Gastrocnemius medialis (tissue), 4 donors: ENCODE measurements at regions of chr11 and their contacts with region 1.

Region 1: GRCh38 chr11:129331871-129332274 is 43.8 kb upstream of the BARX2 start:
- DNase-seq: peak; percentile 45 to 66
- ATAC-seq: peak; percentile 78 to 88
- H3K4me3 ChIP-seq: no peak overlapping the region
- H3K27ac ChIP-seq: no peak overlapping the region
- H3K4me1 ChIP-seq: no peaks in the 10 kb centered on the region
- H3K27me3 ChIP-seq: no peaks in the 10 kb centered on the region
- CTCF ChIP-seq: peak; percentile 73 to 85 (median 83)
- POLR2A ChIP-seq: no peak

Region 2: DNA sequence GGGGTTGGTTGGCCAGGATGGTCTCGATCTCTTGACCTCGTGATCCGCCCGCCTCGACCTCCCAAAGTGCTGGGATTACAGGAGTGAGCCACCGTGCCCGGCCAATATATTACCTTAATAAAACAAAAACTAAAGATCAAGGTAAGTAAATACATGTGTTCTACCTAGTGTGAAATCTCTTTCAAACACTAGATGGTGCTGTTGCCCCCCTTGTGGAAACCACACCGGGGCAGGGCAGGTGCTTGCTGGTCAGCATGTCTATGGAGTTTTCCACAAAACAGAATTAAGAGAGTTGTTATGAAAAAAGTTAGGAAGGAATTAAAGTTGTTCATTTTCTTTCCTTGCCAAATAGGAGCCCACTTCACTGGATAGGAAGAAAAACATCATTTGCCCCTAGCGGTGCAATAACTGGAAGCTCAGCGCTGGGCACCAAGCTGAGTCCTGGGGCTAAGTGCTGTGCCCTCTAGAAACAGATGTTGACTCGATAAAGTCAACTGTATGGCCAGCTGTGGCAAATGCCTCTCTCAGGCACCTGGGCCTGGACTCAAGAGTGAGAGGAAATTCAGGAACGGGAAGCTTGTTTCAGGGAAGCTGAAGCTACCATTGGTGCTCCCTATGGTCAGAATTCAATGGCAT is 447.1 kb before region 1 on chr11:
- in situ Hi-C with region 1: loop called in 1 of 4 experiments (anchors 25 kb)
- intact Hi-C with region 1: loop called (anchors 5 kb)
- DNase-seq: peak in 1 of 2 donors; percentile 45
- ATAC-seq: peak; percentile 68 to 71
- H3K4me3 ChIP-seq: no peak overlapping the region
- H3K27ac ChIP-seq: no peak overlapping the region
- H3K4me1 ChIP-seq: no peaks in the 10 kb centered on the region
- H3K27me3 ChIP-seq: peaks cover 1 to 16% (median 5%) of the 10 kb centered on the region in 3 donors
- CTCF ChIP-seq: peak; percentile 71 to 87 (median 76)
- POLR2A ChIP-seq: no peak

Region 3: DNA sequence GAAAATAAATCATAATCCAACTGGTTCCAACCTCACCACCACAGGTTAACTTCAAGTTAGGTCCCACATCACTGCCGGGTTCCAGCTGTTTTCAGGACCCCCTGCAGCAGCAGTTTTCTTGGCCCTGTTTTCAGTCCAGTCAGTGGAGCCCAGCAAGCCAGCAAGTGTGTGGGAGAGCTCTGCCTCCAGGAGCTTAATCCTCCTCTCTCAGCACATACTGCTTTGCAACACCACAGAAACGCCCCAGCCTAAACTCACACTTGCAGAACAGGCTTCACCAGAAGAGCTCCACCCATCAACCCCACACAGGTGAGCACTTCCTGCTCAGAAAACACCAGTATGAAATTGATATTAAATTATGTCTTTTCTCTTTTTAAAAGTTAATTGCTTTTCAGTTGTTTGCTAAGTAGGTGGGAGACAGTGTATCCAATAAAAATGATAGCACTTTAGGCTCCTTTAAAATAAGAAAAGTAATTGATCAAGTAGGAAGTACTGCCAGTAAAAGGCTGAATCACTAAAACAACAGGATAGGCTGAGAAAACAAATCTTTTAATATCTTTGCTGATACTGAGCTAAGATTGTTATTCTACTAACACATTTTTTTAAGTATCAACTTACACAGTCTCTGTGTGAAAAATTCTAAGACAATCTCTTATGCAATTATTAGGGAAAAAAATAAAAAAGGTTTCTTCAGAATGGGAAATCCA is 307.8 kb before region 1 on chr11:
- in situ Hi-C with region 1: loop called in 1 of 4 experiments (anchors 25 kb)
- intact Hi-C with region 1: no loop called
- DNase-seq: no peak
- ATAC-seq: no peak
- H3K4me3 ChIP-seq: no peak overlapping the region
- H3K27ac ChIP-seq: no peak overlapping the region
- H3K4me1 ChIP-seq: peaks cover 12 to 13% of the 10 kb centered on the region in 2 donors
- H3K27me3 ChIP-seq: no peaks in the 10 kb centered on the region
- CTCF ChIP-seq: no peak
- POLR2A ChIP-seq: no peak

Region 4: DNA sequence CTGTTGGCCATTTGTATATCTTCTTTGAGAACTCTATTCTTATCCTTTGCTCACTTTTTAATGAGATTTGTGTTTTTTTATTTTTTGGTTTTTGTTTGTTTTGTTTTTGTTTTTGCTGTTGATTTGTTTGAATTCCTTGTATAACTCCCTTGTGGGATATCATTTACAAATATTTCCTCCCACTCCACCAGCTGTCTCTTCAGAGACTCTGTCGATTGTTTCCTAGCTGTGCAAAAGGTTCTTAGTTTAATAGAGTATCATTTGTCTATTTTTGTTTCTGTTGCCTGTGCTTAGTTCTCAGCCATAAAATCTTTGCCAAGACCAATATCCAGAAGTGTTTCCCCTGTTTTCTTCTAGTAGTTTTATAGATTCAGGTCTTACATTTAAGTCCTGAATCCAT is 222.2 kb before region 1 on chr11:
- in situ Hi-C with region 1: loop called in 1 of 4 experiments (anchors 5 kb)
- intact Hi-C with region 1: no loop called
- DNase-seq: no peak
- ATAC-seq: no peak
- H3K4me3 ChIP-seq: no peak overlapping the region
- H3K27ac ChIP-seq: no peak overlapping the region
- H3K4me1 ChIP-seq: no peaks in the 10 kb centered on the region
- H3K27me3 ChIP-seq: no peaks in the 10 kb centered on the region
- CTCF ChIP-seq: no peak
- POLR2A ChIP-seq: no peak

Region 5: DNA sequence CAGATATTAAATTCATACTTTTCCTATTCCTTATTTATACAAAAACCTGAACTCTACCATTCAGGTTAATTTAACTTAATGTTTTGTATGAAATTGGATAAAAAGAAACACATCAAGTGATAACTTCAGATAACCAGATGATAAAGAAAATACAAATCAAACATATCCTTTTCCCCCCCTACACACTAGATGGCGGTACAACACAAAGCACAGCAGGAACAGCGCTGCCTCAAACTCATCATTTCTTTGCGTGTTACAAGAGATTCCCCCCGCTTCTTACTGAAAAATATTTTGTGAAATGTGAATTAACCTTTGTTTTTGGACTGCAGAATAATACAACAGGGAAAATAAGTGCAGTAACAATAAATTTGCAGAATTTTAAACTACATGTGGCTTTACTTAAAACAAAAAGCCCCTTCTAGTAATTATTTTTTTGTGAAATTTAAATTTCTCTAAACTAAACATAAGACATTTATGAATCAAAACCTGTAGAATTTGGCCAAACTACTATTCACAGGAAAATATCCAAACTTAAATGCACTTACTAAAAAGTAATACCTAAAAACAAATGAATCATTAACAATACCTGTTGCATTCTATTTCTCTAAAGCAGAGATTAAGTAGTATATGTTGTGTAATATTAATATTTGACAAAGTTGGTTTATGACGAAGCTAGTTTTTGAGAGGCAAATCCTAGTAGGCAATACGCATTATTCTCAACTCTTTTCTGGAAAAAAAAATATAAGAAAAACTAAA is 214.1 kb before region 1 on chr11:
- in situ Hi-C with region 1: loop called in 3 of 4 experiments (anchors 5 kb)
- intact Hi-C with region 1: loop called (anchors 1 kb)
- DNase-seq: no peak
- ATAC-seq: peak in 1 of 2 donors; percentile 66
- H3K4me3 ChIP-seq: no peak overlapping the region
- H3K27ac ChIP-seq: no peak overlapping the region
- H3K4me1 ChIP-seq: no peaks in the 10 kb centered on the region
- H3K27me3 ChIP-seq: no peaks in the 10 kb centered on the region
- CTCF ChIP-seq: peak; percentile 65 to 87 (median 81)
- POLR2A ChIP-seq: no peak

Region 6: DNA sequence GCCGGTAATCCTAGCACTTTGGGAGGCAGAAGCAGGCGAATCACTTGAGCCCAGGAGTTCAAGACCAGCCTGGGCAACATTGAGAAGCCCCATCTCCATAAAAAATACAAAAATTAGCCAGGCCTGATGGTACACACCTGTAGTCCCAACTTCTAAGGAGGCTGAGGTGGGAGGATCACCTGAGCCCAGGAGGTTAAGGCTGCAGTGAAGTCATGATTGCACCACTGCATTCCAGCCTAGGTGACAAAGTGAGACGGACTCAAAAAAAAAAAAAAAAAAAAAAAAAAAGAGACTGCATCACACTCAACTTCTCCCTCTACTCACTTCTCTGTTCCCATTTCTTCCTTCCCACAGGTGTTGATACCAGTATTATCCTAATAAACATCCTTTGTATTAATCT is 100.1 kb before region 1 on chr11:
- in situ Hi-C with region 1: no loop called
- intact Hi-C with region 1: loop called (anchors 1 kb)
- DNase-seq: no peak
- ATAC-seq: no peak
- H3K4me3 ChIP-seq: no peak overlapping the region
- H3K27ac ChIP-seq: no peak overlapping the region
- H3K4me1 ChIP-seq: no peaks in the 10 kb centered on the region
- H3K27me3 ChIP-seq: no peaks in the 10 kb centered on the region
- CTCF ChIP-seq: no peak
- POLR2A ChIP-seq: no peak

Region 7: DNA sequence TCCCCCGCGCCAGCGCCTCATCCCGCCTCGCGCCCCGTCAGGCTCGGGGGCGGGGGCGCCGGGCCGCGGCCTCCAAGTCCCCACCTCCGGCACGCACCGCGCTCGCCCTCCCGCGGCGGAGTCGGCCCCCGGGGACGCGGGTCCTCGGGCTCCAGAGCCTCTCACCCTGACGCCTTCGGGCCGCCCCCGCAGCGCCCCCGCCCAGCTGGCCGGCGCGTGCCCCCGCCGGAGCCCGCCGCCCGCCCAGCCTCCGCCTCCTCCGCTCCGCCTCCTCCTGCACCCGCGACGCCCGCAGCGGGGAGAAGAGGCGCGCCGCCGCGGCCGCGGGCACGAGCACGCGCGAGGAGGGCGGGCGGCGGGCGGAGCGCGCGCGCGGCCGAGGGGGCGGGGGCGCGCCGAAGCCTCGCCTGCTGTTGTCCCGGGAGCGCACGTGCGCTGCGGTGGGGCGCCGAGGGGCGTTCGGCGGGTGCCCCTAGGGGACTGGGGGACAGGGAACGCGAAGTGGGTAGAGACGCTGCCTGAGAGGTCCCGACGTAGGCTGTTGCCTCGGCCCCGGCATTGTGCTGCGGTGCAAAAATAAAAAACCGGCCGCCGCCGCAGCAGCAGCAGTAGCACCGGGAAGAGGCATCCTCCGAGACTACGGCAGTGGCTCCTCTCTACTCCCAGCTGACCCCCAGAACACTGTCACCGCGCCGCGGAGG is 52.4 kb before region 1 on chr11:
- in situ Hi-C with region 1: no loop called
- intact Hi-C with region 1: loop called (anchors 5 kb)
- DNase-seq: peak; percentile 52 to 69
- ATAC-seq: peak; percentile 84 to 87
- H3K4me3 ChIP-seq: peak overlapping the region; percentile 51 to 74 (median 63)
- H3K27ac ChIP-seq: peak overlapping the region; percentile 67 to 70 (median 68)
- H3K4me1 ChIP-seq: peaks cover 37 to 46% of the 10 kb centered on the region in 2 donors
- H3K27me3 ChIP-seq: no peaks in the 10 kb centered on the region
- CTCF ChIP-seq: no peak
- POLR2A ChIP-seq: peak; percentile 62

Region 8: GRCh38 chr11:129391821-129392220 is 59.9 kb after region 1 on chr11:
- in situ Hi-C with region 1: no loop called
- intact Hi-C with region 1: no loop called
- DNase-seq: no peak
- ATAC-seq: no peak
- H3K4me3 ChIP-seq: no peak overlapping the region
- H3K27ac ChIP-seq: no peak overlapping the region
- H3K4me1 ChIP-seq: no peaks in the 10 kb centered on the region
- H3K27me3 ChIP-seq: peaks cover 0 to 13% (median 7%) of the 10 kb centered on the region in 3 donors
- CTCF ChIP-seq: no peak
- POLR2A ChIP-seq: no peak